CD8-positive, alpha-beta T cell (primary cell): ENCODE measurements at regions of chr10 and their contacts with region 1.

Region 1: GRCh38 chr10:58384999-58385783 is at the start of gene TFAM:
- DNase-seq: peak; percentile 94 to 99 (median 96)
- ATAC-seq: peak; percentile 88
- H3K4me3 ChIP-seq: peak within 1 kb of the TSS; percentile 72 to 92
- H3K4me3 Mint-ChIP-seq: peak within 1 kb of the TSS; percentile 95
- H3K27ac ChIP-seq: peak within 1 kb of the TSS; percentile 75 to 80
- H3K27ac Mint-ChIP-seq: peak within 1 kb of the TSS; percentile 94
- H3K4me1 ChIP-seq: peaks cover 34% of the 10 kb centered on the region
- H3K4me1 Mint-ChIP-seq: peaks cover 59% of the 10 kb centered on the region
- H3K27me3 ChIP-seq: no peaks in the 10 kb centered on the region
- H3K27me3 Mint-ChIP-seq: no peaks in the 10 kb centered on the region
- CTCF ChIP-seq: peak; percentile 36
- total RNA-seq, gene TFAM: 53.7 to 55.7 TPM

Region 2: DNA sequence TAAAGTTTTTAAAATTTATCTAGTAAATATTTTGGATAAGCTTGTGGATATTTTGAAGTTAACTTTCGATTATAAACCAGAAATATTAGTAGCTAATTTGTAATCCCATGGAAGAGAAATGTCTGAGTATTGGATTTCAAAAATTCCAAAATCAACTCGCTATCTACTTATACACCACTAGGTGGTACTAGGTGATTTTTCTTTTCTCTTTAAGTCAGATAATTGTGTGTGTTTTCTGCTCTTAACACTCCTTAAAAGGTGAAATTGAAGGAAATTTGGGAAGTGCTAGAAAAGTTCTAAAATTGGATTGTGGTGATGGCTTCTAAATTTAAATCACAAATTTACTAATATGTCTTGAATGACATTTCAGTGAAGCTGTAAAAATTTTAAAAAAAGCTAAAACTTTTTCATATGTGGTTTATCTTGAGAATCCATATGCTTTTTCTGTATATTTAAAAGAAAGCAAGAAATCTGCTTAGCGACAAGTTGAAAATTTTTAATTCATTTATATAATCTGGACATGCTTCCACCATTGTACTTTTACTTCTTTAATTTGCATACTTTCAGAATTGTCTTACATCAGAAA is 207.7 kb before region 1 on chr10:
- CTCF ChIA-PET with region 1: interaction called, 4 read pairs
- POLR2A ChIA-PET with region 1: no interaction called
- intact Hi-C with region 1: loop called (anchors 5 kb)
- DNase-seq: peak in 2 of 9 experiments; percentile 13 to 48
- ATAC-seq: no peak
- H3K4me3 ChIP-seq: no peak overlapping the region
- H3K4me3 Mint-ChIP-seq: no peak overlapping the region
- H3K27ac ChIP-seq: no peak overlapping the region
- H3K27ac Mint-ChIP-seq: no peak overlapping the region
- H3K4me1 ChIP-seq: no peaks in the 10 kb centered on the region
- H3K4me1 Mint-ChIP-seq: no peaks in the 10 kb centered on the region
- H3K27me3 ChIP-seq: no peaks in the 10 kb centered on the region
- H3K27me3 Mint-ChIP-seq: peaks cover 7% of the 10 kb centered on the region
- CTCF ChIP-seq: peak; percentile 71

Region 3: DNA sequence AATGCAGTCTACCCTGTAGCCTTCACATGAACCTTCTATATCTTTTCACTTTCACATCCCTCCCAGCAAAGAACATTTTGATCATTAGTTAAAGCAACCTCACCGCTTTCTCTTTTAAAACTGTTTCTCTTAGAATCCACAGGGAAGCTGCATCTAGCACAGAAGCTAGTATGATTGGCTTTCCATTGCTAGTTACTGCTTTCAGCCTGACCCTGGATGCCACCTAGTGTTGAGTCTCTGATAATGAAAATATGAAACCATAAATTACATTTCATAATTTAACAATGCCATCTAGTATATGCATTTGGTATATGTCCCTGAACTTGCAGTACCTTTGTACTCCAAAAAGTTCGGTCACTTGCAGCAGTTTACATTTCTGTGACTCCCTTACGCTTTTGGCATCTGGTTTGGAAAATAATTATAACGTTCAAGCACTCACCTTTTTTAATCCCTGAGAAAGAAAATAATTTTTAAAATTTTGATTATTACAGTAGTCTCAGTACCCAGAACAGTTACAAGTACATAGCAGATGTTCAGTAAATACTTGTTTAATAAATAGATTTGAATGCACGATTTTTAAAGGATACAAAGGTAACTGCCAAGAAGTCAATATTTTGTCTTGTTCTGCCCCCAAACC is 93.5 kb before region 1 on chr10:
- CTCF ChIA-PET with region 1: interaction called, 17 read pairs
- POLR2A ChIA-PET with region 1: interaction called, 8 read pairs
- intact Hi-C with region 1: no loop called
- DNase-seq: peak in 6 of 9 experiments; percentile 14 to 67 (median 28)
- ATAC-seq: peak; percentile 73
- H3K4me3 ChIP-seq: no peak overlapping the region
- H3K4me3 Mint-ChIP-seq: no peak overlapping the region
- H3K27ac ChIP-seq: no peak overlapping the region
- H3K27ac Mint-ChIP-seq: no peak overlapping the region
- H3K4me1 ChIP-seq: no peaks in the 10 kb centered on the region
- H3K4me1 Mint-ChIP-seq: no peaks in the 10 kb centered on the region
- H3K27me3 ChIP-seq: no peaks in the 10 kb centered on the region
- H3K27me3 Mint-ChIP-seq: no peaks in the 10 kb centered on the region
- CTCF ChIP-seq: peak; percentile 83

Region 4: GRCh38 chr10:58334817-58335305 is 50.3 kb before region 1 on chr10 and contains the start of gene UBE2D1:
- CTCF ChIA-PET with region 1: interaction called, 3 read pairs
- POLR2A ChIA-PET with region 1: interaction called, 20 read pairs
- intact Hi-C with region 1: loop called (anchors 1 to 2 kb)
- DNase-seq: peak; percentile 55 to 89 (median 82)
- ATAC-seq: peak; percentile 97
- H3K4me3 ChIP-seq: peak within 1 kb of the TSS; percentile 65 to 87
- H3K4me3 Mint-ChIP-seq: peak within 1 kb of the TSS; percentile 91
- H3K27ac ChIP-seq: peak within 1 kb of the TSS; percentile 34 to 65
- H3K27ac Mint-ChIP-seq: peak within 1 kb of the TSS; percentile 88
- H3K4me1 ChIP-seq: peaks cover 22% of the 10 kb centered on the region
- H3K4me1 Mint-ChIP-seq: peaks cover 38% of the 10 kb centered on the region
- H3K27me3 ChIP-seq: no peaks in the 10 kb centered on the region
- H3K27me3 Mint-ChIP-seq: peaks cover 3% of the 10 kb centered on the region
- CTCF ChIP-seq: no peak
- total RNA-seq, gene UBE2D1: 8.8 to 9.4 TPM

Region 5: DNA sequence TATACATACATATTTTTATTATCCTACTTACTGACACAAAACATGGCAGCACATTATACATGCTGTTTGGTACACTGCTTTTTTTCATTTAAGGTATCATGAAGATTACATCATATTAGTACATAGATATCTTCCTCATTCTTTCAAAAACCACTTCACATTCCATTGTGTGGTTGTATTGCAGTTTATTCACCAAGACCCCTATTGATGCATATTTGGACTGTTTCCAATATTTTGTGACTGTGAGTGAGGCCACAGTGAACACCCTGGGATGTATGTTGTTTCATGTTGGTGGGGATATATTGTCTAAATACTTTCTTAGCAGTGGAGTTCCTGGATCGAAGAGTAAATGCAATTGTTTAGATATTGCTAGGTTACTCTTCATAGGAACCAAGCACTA is 39.0 kb after region 1 on chr10:
- CTCF ChIA-PET with region 1: no interaction called
- POLR2A ChIA-PET with region 1: no interaction called
- intact Hi-C with region 1: no loop called
- DNase-seq: no peak
- ATAC-seq: no peak
- H3K4me3 ChIP-seq: no peak overlapping the region
- H3K4me3 Mint-ChIP-seq: no peak overlapping the region
- H3K27ac ChIP-seq: no peak overlapping the region
- H3K27ac Mint-ChIP-seq: no peak overlapping the region
- H3K4me1 ChIP-seq: no peaks in the 10 kb centered on the region
- H3K4me1 Mint-ChIP-seq: no peaks in the 10 kb centered on the region
- H3K27me3 ChIP-seq: no peaks in the 10 kb centered on the region
- H3K27me3 Mint-ChIP-seq: peaks cover 8% of the 10 kb centered on the region
- CTCF ChIP-seq: no peak

Region 6: GRCh38 chr10:58435297-58435985 is 50.2 kb after region 1 on chr10:
- CTCF ChIA-PET with region 1: no interaction called
- POLR2A ChIA-PET with region 1: no interaction called
- intact Hi-C with region 1: loop called in 1 of 2 experiments (anchors 2 kb)
- DNase-seq: peak in 2 of 9 experiments; percentile 1 to 13
- ATAC-seq: no peak
- H3K4me3 ChIP-seq: no peak overlapping the region
- H3K4me3 Mint-ChIP-seq: no peak overlapping the region
- H3K27ac ChIP-seq: no peak overlapping the region
- H3K27ac Mint-ChIP-seq: no peak overlapping the region
- H3K4me1 ChIP-seq: peaks cover 14% of the 10 kb centered on the region
- H3K4me1 Mint-ChIP-seq: peaks cover 17% of the 10 kb centered on the region
- H3K27me3 ChIP-seq: no peaks in the 10 kb centered on the region
- H3K27me3 Mint-ChIP-seq: peaks cover 6% of the 10 kb centered on the region
- CTCF ChIP-seq: no peak

Region 7: GRCh38 chr10:59465088-59465487 is 1079.9 kb after region 1 on chr10:
- CTCF ChIA-PET with region 1: no interaction called
- POLR2A ChIA-PET with region 1: no interaction called
- intact Hi-C with region 1: no loop called
- DNase-seq: no peak
- ATAC-seq: no peak
- H3K4me3 ChIP-seq: no peak overlapping the region
- H3K4me3 Mint-ChIP-seq: no peak overlapping the region
- H3K27ac ChIP-seq: no peak overlapping the region
- H3K27ac Mint-ChIP-seq: no peak overlapping the region
- H3K4me1 ChIP-seq: no peaks in the 10 kb centered on the region
- H3K4me1 Mint-ChIP-seq: no peaks in the 10 kb centered on the region
- H3K27me3 ChIP-seq: no peaks in the 10 kb centered on the region
- H3K27me3 Mint-ChIP-seq: no peaks in the 10 kb centered on the region
- CTCF ChIP-seq: no peak